K562 (cell line): ENCODE measurements at regions of chr16 and their contacts with region 1.

Region 1: GRCh38 chr16:67040906-67041305 is 12.0 kb downstream of the CBFB start:
- DNase-seq: no peak
- ATAC-seq: no peak; the same call in 2 of the 3 replicates
- H3K4me3 ChIP-seq: no peak overlapping the region
- H3K27ac ChIP-seq: no peak overlapping the region
- H3K4me1 ChIP-seq: no peaks in the 10 kb centered on the region
- H3K27me3 ChIP-seq: no peaks in the 10 kb centered on the region
- CTCF ChIP-seq: no peak
- EP300 ChIP-seq: no peak
- POLR2A ChIP-seq: no peak
- RAD21 ChIP-seq: no peak

Region 2: GRCh38 chr16:67028555-67029248 is 12.2 kb before region 1 on chr16 and contains the start of gene CBFB:
- CTCF ChIA-PET with region 1: no interaction called
- POLR2A ChIA-PET with region 1: interaction called, 32 read pairs
- in situ Hi-C with region 1: no loop called
- intact Hi-C with region 1: no loop called
- DNase-seq: peak; percentile 96 to 99 (median 98)
- ATAC-seq: peak; percentile 92
- H3K4me3 ChIP-seq: peak within 1 kb of the TSS; percentile 85
- H3K27ac ChIP-seq: peak within 1 kb of the TSS; percentile 97
- H3K4me1 ChIP-seq: peaks cover 13 to 29% of the 10 kb centered on the region in 2 experiments
- H3K27me3 ChIP-seq: no peaks in the 10 kb centered on the region
- CTCF ChIP-seq: peak; percentile 8 to 44 (median 12); a peak in 3 of 6 replicates
- EP300 ChIP-seq: peak; percentile 18
- POLR2A ChIP-seq: peak; percentile 98
- RAD21 ChIP-seq: peak in 1 of 2 experiments; percentile 2; a peak in 2 of 4 replicates
- polyA plus RNA-seq, gene CBFB: 22.0 to 40.7 TPM

Region 3: DNA sequence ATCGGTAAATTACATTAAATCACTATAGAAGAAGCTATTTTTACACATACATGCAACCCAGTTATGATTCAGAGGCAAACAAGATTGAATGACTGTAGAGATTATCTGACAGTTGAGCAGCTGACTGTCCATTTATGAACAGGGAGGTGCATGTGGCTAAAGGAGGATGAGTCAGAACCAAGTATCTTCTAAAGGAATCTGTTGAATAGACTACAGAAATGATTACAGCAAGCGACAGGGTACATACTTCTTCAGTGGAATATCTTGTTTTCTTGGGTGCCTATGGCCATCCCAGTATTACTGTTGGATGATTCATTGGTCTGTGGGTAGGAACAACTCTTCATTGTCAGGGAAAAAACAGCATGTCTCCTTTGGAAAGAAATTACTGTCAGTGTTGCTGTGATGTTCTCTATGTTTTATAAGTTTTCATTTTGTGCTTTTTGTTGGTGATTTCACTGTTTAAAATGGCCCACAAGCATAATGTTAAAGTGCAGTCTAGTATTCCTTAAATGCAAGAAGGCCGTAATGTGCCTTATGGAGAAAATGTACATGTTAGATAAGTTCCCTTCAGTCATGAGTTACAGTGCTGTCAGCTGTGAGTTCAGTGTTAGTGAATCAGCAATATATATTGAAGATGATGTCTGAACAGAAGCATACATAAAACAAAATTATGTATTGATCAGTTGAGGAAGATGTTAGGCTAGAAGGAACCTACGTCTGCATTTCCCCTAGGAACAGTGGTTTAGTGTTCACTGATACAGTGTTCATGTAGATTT is 15.0 kb after region 1 on chr16:
- CTCF ChIA-PET with region 1: no interaction called
- POLR2A ChIA-PET with region 1: interaction called, 28 read pairs
- in situ Hi-C with region 1: no loop called
- intact Hi-C with region 1: no loop called
- DNase-seq: peak in 3 of 4 experiments; percentile 17 to 57 (median 39)
- ATAC-seq: peak; percentile 56
- H3K4me3 ChIP-seq: no peak overlapping the region
- H3K27ac ChIP-seq: peak overlapping the region; percentile 58; the same call in 2 of the 3 replicates
- H3K4me1 ChIP-seq: peaks cover 13% of the 10 kb centered on the region in 2 experiments
- H3K27me3 ChIP-seq: no peaks in the 10 kb centered on the region
- CTCF ChIP-seq: no peak
- EP300 ChIP-seq: no peak
- POLR2A ChIP-seq: no peak
- RAD21 ChIP-seq: no peak